Panc1 (cell line): ENCODE measurements at regions of chr5 and their contacts with region 1.

Region 1: DNA sequence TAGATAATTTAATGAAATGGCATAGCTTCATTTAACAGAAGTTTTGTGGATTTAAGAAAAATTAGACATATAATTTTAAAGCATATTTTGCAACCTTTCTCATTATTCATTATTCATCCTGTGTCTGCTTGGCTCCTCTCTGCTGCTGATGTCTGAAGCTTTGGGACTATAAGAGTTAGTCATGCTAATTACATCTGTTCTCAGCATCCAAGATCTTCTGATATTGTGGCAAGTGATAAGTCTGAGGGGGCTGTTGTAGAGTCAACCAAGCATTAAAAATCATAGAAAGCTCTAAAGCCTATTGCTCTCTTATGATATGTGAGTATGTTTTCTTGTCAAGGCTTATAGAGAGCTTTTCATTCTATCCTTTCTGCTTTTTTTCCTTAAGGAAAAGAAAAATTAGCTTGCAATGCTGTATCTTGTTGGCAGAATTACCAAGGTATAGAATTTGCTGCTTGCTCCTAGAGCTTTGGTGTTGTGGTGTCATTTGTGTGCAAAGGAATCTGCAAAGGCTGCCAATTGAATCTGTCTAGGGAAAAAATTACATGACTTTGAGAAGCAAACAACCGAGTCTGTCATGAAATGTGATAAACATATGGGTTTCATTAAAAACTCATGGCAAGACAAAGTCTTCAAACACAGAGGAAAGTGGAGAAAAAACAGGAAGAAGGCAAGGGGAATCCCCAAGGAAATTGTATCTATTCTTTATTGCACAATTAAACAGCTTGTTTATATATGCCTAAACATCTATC is 156.1 kb upstream of the DAB2 start:
- DNase-seq: no peak
- ATAC-seq: no peak
- H3K4me3 ChIP-seq: no peak overlapping the region
- H3K27ac ChIP-seq: no peak overlapping the region
- H3K4me1 ChIP-seq: no peaks in the 10 kb centered on the region
- H3K27me3 ChIP-seq: peaks cover 2% of the 10 kb centered on the region; the same call in 1 of the 2 replicates
- CTCF ChIP-seq: no peak

Region 2: GRCh38 chr5:39608024-39608423 is 27.1 kb after region 1 on chr5:
- CTCF ChIA-PET with region 1: no interaction called
- POLR2A ChIA-PET with region 1: no interaction called
- in situ Hi-C with region 1: no loop called
- intact Hi-C with region 1: no loop called
- DNase-seq: no peak
- ATAC-seq: no peak
- H3K4me3 ChIP-seq: no peak overlapping the region
- H3K27ac ChIP-seq: no peak overlapping the region
- H3K4me1 ChIP-seq: no peaks in the 10 kb centered on the region
- H3K27me3 ChIP-seq: no peaks in the 10 kb centered on the region
- CTCF ChIP-seq: no peak

Region 3: GRCh38 chr5:39826051-39826450 is 245.2 kb after region 1 on chr5:
- CTCF ChIA-PET with region 1: no interaction called
- POLR2A ChIA-PET with region 1: no interaction called
- in situ Hi-C with region 1: no loop called
- intact Hi-C with region 1: no loop called
- DNase-seq: no peak
- ATAC-seq: no peak
- H3K4me3 ChIP-seq: no peak overlapping the region
- H3K27ac ChIP-seq: no peak overlapping the region
- H3K4me1 ChIP-seq: no peaks in the 10 kb centered on the region
- H3K27me3 ChIP-seq: no peaks in the 10 kb centered on the region
- CTCF ChIP-seq: no peak

Region 4: DNA sequence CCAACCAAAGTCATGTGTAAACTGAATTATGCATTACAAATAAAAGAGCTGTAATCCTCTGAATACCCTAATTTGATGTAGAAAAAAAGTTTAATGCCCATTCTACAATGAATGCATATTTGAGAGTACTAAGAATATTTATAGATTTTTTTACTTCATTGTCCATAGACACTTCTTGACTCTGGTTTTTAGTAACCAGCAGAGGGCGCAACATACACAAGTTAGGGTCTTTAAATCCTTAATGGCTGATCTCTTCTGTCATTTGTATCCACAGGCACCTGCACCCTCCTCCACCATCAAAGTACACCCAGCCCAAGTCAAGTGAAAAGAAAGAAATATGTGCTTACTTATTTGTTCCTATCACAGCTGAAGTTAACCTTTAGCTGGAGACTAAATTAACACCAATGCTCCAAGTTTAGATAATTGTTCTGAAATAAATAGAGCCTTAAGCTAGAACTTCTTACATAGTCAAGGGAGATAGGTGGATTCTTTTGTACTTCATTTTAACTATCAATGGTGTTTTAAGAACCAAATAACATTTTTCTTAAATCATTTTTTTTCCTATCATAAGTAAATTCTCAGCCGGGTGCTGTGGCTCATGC is 368.1 kb after region 1 on chr5:
- CTCF ChIA-PET with region 1: no interaction called
- POLR2A ChIA-PET with region 1: no interaction called
- in situ Hi-C with region 1: no loop called
- intact Hi-C with region 1: loop called (anchors 10 kb)
- DNase-seq: peak; percentile 73
- ATAC-seq: peak; percentile 94
- H3K4me3 ChIP-seq: no peak overlapping the region
- H3K27ac ChIP-seq: no peak overlapping the region
- H3K4me1 ChIP-seq: no peaks in the 10 kb centered on the region
- H3K27me3 ChIP-seq: no peaks in the 10 kb centered on the region
- CTCF ChIP-seq: peak; percentile 73; the same call in 1 of the 2 replicates

Region 5: DNA sequence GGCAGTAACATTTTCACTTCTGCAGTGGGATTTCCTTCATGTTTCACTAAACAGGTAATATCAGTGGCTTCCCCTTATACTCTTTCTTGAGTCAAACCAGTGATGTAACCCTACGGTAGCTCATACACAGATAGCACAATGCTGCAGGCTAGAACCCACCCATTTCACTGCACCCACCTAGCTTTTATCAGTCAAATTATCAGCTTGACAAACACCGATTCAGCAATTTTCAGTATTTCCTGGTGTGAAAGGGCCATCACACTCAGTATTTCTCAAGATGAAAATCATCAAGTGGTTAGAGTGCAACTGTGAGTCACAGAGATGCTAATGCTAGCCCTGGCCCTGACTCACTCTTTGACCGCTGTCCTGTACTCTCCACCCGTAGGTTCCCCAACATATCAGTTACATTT is 856.6 kb after region 1 on chr5:
- CTCF ChIA-PET with region 1: no interaction called
- POLR2A ChIA-PET with region 1: no interaction called
- in situ Hi-C with region 1: no loop called
- intact Hi-C with region 1: loop called (anchors 5 kb)
- DNase-seq: no peak
- ATAC-seq: no peak
- H3K4me3 ChIP-seq: no peak overlapping the region
- H3K27ac ChIP-seq: no peak overlapping the region
- H3K4me1 ChIP-seq: no peaks in the 10 kb centered on the region
- H3K27me3 ChIP-seq: no peaks in the 10 kb centered on the region
- CTCF ChIP-seq: no peak

Region 6: DNA sequence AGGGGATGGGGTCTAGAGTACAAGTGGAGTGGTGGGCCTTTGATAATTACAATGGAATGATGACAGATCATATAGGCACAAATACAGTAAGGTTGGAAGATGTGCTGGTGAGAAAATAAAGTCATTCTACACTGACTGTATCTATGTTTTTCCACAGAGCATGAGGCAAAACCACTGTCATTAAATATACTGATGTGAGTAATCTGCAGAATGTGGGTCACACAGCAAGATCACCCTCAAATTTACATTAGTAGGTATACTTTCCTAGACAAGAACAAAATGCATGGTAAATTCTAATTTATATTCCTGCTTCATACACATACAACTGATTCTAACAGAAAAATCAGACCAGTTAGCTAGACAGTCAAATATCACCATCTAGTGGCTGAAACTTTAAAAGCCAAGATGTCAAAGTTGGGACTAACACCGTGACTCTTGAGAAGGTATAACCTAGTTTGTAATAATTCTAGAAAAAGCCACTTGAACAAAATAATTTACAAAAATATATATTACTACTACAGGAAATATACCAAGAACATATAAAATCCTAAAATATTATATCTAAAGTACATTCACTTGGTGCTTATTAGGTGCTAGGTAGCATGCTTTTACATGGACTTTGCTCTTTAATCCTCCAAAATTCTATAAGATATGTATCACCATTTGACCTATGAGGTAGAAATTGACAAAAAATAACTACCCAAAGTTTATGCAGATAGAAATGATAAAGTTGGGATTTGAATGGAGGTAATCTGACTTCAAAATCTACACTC is 1155.4 kb after region 1 on chr5:
- CTCF ChIA-PET with region 1: no interaction called
- POLR2A ChIA-PET with region 1: no interaction called
- in situ Hi-C with region 1: no loop called
- intact Hi-C with region 1: loop called (anchors 10 kb)
- DNase-seq: peak; percentile 80
- ATAC-seq: peak; percentile 84
- H3K4me3 ChIP-seq: no peak overlapping the region
- H3K27ac ChIP-seq: no peak overlapping the region
- H3K4me1 ChIP-seq: no peaks in the 10 kb centered on the region
- H3K27me3 ChIP-seq: no peaks in the 10 kb centered on the region
- CTCF ChIP-seq: peak; percentile 78; the same call in 1 of the 2 replicates

Region 7: DNA sequence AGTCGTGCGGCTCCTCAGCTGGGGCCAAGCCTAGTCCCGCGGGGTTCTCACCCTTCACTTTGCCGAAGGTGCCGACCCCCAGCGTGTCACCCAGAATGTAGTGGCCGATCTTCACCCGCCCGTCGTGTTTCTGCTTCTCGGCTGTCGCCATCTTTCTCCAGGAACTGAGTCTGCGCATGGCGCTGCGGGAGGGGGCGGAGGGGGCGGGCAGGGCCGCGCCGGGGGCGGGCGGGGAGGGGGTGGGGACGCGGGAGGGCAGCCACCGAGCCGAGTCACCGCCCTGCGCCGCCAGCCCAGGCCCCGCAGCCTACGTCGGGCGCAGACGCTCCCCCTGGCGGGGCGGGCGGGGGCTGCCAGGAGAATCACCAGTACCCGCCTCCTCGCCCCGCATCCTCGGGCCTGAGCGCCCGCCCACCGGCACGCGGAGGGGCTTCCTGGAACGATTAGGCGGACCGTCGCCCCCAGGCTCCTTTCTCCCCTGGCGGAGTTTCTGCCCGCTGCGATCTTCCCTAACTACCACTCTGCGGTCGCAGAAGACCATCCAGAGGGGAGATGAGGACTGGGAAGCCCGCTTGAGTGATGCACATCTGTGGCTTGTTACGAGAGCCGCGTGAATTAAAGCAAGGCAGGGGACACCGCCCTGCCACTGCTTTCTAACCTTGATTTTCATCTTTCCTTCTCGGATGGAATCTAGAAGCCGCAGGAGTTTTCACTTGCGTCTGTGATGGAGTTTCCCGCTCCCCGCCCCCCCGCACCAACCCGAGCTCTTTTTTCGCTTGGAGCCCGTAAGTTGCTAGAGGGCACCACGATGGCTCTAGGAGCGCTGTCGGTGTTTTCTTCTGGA is 1217.4 kb after region 1 on chr5 and contains the start of gene PRKAA1:
- CTCF ChIA-PET with region 1: interaction called, 11 read pairs
- POLR2A ChIA-PET with region 1: no interaction called
- in situ Hi-C with region 1: no loop called
- intact Hi-C with region 1: no loop called
- DNase-seq: peak; percentile 73
- ATAC-seq: peak; percentile 97
- H3K4me3 ChIP-seq: peak within 1 kb of the TSS; percentile 96 to 99
- H3K27ac ChIP-seq: peak within 1 kb of the TSS; percentile 94
- H3K4me1 ChIP-seq: peaks cover 17% of the 10 kb centered on the region
- H3K27me3 ChIP-seq: no peaks in the 10 kb centered on the region
- CTCF ChIP-seq: peak; percentile 83
- total RNA-seq, gene PRKAA1: 75.8 TPM